H1 (cell line): ENCODE measurements at regions of chr9 and their contacts with region 1.

Region 1: GRCh38 chr9:36560857-36561221 is 11.9 kb upstream of the MELK start:
- DNase-seq: no peak
- H3K4me3 ChIP-seq: no peak overlapping the region
- H3K27ac ChIP-seq: no peak overlapping the region
- H3K4me1 ChIP-seq: peaks cover 2 to 5% (median 3%) of the 10 kb centered on the region in 4 experiments; a peak in 4 of 7 replicates
- H3K27me3 ChIP-seq: no peaks in the 10 kb centered on the region
- CTCF ChIP-seq: no peak
- EP300 ChIP-seq: no peak
- POLR2A ChIP-seq: no peak
- RAD21 ChIP-seq: no peak

Region 2: GRCh38 chr9:36346569-36346968 is 214.3 kb before region 1 on chr9:
- CTCF ChIA-PET with region 1: no interaction called
- POLR2A ChIA-PET with region 1: no interaction called
- DNase-seq: no peak
- H3K4me3 ChIP-seq: no peak overlapping the region
- H3K27ac ChIP-seq: no peak overlapping the region
- H3K4me1 ChIP-seq: no peaks in the 10 kb centered on the region
- H3K27me3 ChIP-seq: no peaks in the 10 kb centered on the region
- CTCF ChIP-seq: no peak
- EP300 ChIP-seq: no peak
- POLR2A ChIP-seq: no peak
- RAD21 ChIP-seq: no peak

Region 3: GRCh38 chr9:36542355-36542754 is 18.5 kb before region 1 on chr9:
- CTCF ChIA-PET with region 1: interaction called, 10 read pairs
- POLR2A ChIA-PET with region 1: no interaction called
- DNase-seq: no peak
- H3K4me3 ChIP-seq: no peak overlapping the region
- H3K27ac ChIP-seq: no peak overlapping the region
- H3K4me1 ChIP-seq: no peaks in the 10 kb centered on the region
- H3K27me3 ChIP-seq: no peaks in the 10 kb centered on the region
- CTCF ChIP-seq: peak; percentile 29 to 48 (median 37)
- EP300 ChIP-seq: no peak
- POLR2A ChIP-seq: no peak
- RAD21 ChIP-seq: peak; percentile 42 to 63